Posterior cingulate gyrus (tissue), 11 donors: ENCODE measurements at regions of chr3 and their contacts with region 1.

Region 1: DNA sequence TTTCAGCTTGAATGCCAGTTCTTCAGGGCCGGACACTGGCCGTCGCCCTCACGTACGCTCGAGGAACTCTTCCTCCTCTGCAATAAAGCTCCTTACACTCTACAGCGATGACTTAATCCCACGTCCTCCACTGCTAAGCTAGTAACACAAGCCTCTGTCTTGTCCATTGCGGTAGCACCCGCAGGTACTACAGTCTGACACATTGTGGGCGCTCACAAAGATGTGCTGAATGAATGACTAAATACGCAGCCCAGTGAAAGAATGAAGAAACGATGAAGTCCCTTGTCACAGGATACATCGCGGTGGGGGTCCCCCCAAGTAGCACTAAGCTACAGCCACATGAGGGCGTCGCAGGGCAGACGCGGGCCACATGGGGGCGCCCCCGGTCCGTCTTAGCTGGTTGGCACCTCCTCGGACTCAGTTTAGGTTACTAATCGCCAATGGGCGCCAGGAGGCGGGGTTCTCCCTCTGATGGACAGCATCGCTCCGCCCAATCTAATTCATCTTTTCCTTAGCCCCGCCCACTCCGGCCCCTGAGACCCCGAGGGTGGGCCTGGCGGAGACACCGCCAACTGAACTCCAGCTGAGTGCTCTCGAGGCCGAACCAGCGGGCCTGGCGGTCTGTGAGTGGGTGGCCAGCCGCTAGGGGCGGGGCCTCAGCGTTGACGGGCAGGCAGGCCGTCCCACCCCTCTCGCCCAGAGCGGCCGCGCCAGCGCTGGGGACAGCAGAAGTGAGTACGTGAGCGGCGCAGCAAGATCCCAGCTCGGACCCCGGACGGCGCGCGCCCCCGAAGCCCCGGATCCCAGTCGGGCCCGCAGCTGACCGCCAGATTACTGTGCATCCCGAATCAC is at the start of gene EPHB3:
- DNase-seq: peak; percentile 97 to 100 (median 100)

Region 2: DNA sequence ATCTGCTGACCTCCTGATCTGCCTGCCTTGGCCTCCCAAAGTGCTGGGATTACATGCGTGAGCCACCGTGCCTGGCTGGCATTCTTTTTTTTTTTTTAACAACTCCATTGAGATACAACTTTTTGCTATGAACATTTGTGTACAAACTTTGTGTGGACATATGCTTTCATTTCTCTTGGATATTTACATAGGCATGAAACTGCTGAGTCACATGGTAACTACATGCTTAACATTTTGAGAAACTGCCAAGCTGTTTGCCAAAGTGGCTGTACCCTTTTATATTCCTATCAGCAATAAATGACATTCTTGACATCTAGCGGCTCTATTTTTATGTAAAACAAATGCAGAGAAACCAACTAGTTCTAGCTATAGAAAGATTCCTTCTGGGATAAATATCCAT is 872.4 kb before region 1 on chr3:
- intact Hi-C with region 1: no loop called
- DNase-seq: no peak

Region 3: GRCh38 chr3:184513276-184514170 is 47.8 kb before region 1 on chr3:
- intact Hi-C with region 1: no loop called
- DNase-seq: peak; percentile 61 to 96 (median 84)

Region 4: DNA sequence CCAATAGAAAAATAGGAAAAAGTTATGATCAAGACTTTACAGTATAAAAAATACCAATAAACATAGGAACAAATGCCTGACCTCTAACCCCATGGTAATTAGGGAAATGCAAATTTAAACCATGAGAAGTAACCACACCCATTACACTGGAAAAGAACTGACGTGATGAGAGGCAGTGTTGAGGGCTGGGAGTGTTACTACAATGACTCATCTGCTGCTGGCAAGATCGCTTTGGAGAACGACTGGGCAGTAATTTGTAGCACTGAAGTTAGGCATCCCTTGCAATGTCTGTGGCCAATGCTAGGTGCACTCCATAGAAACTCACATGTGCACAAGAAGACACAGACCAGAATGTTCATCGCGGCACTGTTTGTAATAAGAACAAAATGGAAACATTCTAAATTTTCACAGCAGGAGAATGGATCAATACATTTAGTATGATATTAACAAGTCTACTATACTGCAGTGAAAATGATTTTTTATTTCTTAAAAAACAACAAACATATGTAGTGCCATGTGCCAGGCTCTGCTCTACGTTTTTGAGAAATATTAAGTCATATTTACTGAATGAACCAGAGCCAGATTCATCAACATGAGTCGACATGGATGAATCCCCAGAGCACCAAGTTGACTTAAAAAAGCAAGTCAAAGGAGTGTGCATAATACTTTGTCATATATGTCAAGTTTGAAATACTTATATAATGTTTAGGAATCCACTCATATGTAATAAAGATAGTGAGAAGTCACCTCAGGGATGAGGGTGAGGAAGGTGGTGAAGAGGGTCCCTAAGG is 37.3 kb before region 1 on chr3:
- intact Hi-C with region 1: no loop called
- DNase-seq: no peak

Region 5: DNA sequence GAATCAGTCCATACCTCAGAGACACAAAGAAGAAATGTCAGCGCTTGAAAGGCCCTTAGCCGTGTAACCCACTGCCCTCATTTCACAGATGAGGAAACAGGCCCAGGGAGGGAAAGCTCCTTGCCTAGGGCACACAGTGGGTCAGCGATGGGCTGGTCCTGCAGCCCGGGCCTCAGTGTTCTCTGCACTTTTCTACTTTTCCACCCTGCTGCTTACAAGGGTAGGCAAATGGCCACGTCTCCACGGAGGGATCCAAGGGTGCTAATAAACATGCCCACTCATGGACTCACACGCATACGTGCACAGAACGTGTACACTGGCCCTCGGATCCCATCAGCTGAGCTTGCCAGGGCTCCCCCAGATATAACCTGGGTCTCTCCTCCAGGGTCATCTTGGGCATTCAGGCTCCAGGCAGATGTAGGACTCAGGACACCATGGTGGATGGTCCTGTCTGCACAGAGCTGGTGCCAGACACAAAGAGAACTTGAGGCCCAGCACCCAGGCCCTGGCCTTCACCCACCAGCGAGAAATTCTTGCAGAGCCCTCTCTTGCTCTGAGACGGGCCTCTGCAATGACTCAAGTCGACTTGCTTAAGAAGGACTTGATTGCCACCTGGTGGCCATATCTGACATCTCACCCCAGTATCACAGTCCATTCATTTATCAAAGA is 216.2 kb after region 1 on chr3:
- intact Hi-C with region 1: loop called (anchors 1 kb)
- DNase-seq: peak; percentile 54 to 97 (median 92)